ENCODE measurements at regions of chr11 and their contacts with region 1.

Region 1: GRCh38 chr11:120172054-120172911 is 34.4 kb upstream of the TRIM29 start:
- DNase-seq: no peak
- H3K4me3 ChIP-seq: no peak overlapping the region
- H3K27ac ChIP-seq: no peak overlapping the region
- H3K27me3 ChIP-seq: peaks cover 46% of the 10 kb centered on the region
- CTCF ChIP-seq: peak; percentile 85

Region 2: GRCh38 chr11:120182790-120183491 is 10.7 kb after region 1 on chr11:
- CTCF ChIA-PET with region 1: interaction called, 56 read pairs
- POLR2A ChIA-PET with region 1: no interaction called
- DNase-seq: no peak
- H3K4me3 ChIP-seq: no peak overlapping the region
- H3K27ac ChIP-seq: no peak overlapping the region
- H3K27me3 ChIP-seq: no peaks in the 10 kb centered on the region
- CTCF ChIP-seq: peak; percentile 34

Region 3: DNA sequence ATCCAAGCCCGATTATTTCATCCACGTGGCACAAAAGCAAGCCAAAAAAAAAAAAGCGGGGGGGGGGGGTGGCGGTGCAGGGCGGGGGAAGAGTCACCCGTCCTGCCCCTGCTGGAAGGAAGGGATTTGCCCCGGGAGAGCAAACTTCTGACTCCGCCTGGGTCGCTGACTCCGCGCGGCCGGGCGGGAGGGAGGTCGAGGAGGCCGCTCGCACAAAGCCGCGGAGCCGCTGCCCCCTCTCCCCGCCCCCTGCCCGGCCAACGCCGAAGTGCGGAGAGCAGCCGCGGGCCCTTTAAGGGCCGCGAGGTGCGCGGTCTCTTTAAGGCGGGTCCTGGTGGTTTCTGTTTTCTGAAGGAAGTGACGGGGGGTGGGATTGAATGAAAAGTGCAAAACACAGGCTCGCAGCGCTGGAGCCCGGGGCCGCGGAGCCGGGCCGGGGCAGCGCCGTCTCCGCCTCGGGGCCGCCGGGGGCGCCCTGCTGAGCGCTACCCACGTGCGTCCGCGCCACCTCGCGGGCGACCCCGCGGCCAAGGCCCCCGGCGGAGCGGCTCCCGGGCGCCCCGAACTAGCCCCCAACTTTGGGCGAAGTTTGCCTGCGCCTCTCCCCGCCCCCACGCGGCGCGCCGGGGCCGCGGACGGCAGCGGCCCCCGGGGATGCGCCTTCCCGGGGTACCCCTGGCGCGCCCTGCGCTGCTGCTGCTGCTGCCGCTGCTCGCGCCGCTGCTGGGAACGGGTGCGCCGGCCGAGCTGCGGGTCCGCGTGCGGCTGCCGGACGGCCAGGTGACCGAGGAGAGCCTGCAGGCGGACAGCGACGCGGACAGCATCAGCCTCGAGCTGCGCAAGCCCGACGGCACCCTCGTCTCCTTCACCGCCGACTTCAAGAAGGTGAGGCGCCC is 38.6 kb after region 1 on chr11 and contains the start of gene OAF:
- CTCF ChIA-PET with region 1: interaction called, 40 read pairs
- POLR2A ChIA-PET with region 1: no interaction called
- DNase-seq: peak; percentile 71
- H3K4me3 ChIP-seq: peak within 1 kb of the TSS; percentile 74
- H3K27ac ChIP-seq: peak within 1 kb of the TSS; percentile 95
- H3K27me3 ChIP-seq: no peaks in the 10 kb centered on the region
- CTCF ChIP-seq: no peak
- polyA plus RNA-seq, gene OAF: 26.6 and 37.0 TPM in 2 replicates

Region 4: GRCh38 chr11:120229451-120230424 is 57.5 kb after region 1 on chr11:
- CTCF ChIA-PET with region 1: interaction called, 148 read pairs
- POLR2A ChIA-PET with region 1: no interaction called
- DNase-seq: no peak
- H3K4me3 ChIP-seq: no peak overlapping the region
- H3K27ac ChIP-seq: peak overlapping the region; percentile 21
- H3K27me3 ChIP-seq: peaks cover 16% of the 10 kb centered on the region
- CTCF ChIP-seq: peak; percentile 72

Region 5: GRCh38 chr11:120235024-120235861 is 63.0 kb after region 1 on chr11:
- CTCF ChIA-PET with region 1: interaction called, 148 read pairs
- POLR2A ChIA-PET with region 1: no interaction called
- DNase-seq: no peak
- H3K4me3 ChIP-seq: no peak overlapping the region
- H3K27ac ChIP-seq: no peak overlapping the region
- H3K27me3 ChIP-seq: peaks cover 48% of the 10 kb centered on the region
- CTCF ChIP-seq: peak; percentile 83

Measured in AG04450 (cell line).